ENCODE measurements at regions of chr16 and their contacts with region 1.

Region 1: GRCh38 chr16:58187092-58187491 is 10.8 kb downstream of the CSNK2A2 start:
- DNase-seq: no peak
- CTCF ChIP-seq: no peak

Region 2: DNA sequence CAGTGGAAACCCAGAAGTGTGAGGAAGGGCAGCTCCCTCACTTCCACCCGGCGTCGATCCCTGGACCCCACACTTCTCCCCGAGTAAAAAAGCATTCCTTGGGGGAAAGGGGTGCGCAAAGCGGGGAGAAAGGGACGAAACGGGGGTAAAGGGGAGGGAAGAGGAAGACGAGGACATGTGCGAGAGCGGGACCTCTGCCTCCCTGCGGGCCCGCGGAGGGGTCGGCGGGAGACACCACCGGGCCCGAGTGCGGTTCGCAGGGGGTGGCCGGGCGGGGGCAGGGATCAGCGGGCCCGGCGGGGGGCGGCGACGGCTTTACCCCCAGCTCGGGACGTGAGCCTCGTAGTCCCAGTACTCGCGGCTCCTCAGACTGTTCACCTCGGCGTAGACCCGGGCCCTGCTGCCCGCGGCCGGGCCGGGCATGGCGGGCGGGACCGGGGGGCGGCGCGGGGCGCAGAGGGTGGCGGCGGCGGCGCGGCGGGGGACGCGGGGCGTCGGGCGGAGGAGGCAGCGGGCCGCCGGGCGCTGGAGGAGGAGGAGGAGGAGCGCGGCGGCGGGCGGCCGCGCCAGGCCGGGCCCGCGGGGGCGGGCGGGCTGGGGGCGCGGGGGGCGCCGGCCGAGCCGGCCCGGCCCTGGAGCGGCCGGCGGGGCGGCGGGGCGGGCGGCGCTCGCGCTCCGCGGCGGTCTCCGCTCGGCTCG is 10.4 kb after region 1 on chr16:
- CTCF ChIA-PET with region 1: interaction called, 32 read pairs
- POLR2A ChIA-PET with region 1: no interaction called
- DNase-seq: peak; percentile 28
- CTCF ChIP-seq: no peak